Endothelial cell of umbilical vein (primary cell): ENCODE measurements at regions of chr10 and their contacts with region 1.

Region 1: GRCh38 chr10:90912174-90912573 is 8.7 kb downstream of the ANKRD1 start:
- DNase-seq: no peak
- H3K4me3 ChIP-seq: no peak overlapping the region
- H3K27ac ChIP-seq: peak overlapping the region; percentile 25
- H3K4me1 ChIP-seq: peaks cover 44% of the 10 kb centered on the region
- H3K27me3 ChIP-seq: no peaks in the 10 kb centered on the region
- CTCF ChIP-seq: no peak
- POLR2A ChIP-seq: no peak

Region 2: GRCh38 chr10:90879062-90879461 is 33.1 kb before region 1 on chr10:
- CTCF ChIA-PET with region 1: interaction called, 19 read pairs
- POLR2A ChIA-PET with region 1: interaction called, 3 read pairs
- dilution Hi-C with region 1: no loop called
- intact Hi-C with region 1: loop called (anchors 2 kb)
- DNase-seq: no peak
- H3K4me3 ChIP-seq: no peak overlapping the region
- H3K27ac ChIP-seq: no peak overlapping the region
- H3K4me1 ChIP-seq: no peaks in the 10 kb centered on the region
- H3K27me3 ChIP-seq: no peaks in the 10 kb centered on the region
- CTCF ChIP-seq: no peak
- POLR2A ChIP-seq: no peak

Region 3: GRCh38 chr10:90885176-90885575 is 27.0 kb before region 1 on chr10:
- CTCF ChIA-PET with region 1: interaction called, 19 read pairs
- POLR2A ChIA-PET with region 1: no interaction called
- dilution Hi-C with region 1: no loop called
- intact Hi-C with region 1: loop called (anchors 2 kb)
- DNase-seq: no peak
- H3K4me3 ChIP-seq: no peak overlapping the region
- H3K27ac ChIP-seq: no peak overlapping the region
- H3K4me1 ChIP-seq: no peaks in the 10 kb centered on the region
- H3K27me3 ChIP-seq: no peaks in the 10 kb centered on the region
- CTCF ChIP-seq: no peak
- POLR2A ChIP-seq: no peak

Region 4: GRCh38 chr10:90969947-90970684 is 57.9 kb after region 1 on chr10:
- CTCF ChIA-PET with region 1: interaction called, 44 read pairs
- POLR2A ChIA-PET with region 1: interaction called, 7 read pairs
- dilution Hi-C with region 1: no loop called
- intact Hi-C with region 1: loop called (anchors 1 kb)
- DNase-seq: no peak
- H3K4me3 ChIP-seq: no peak overlapping the region
- H3K27ac ChIP-seq: peak overlapping the region; percentile 28
- H3K4me1 ChIP-seq: peaks cover 8% of the 10 kb centered on the region
- H3K27me3 ChIP-seq: no peaks in the 10 kb centered on the region
- CTCF ChIP-seq: no peak
- POLR2A ChIP-seq: no peak

Region 5: DNA sequence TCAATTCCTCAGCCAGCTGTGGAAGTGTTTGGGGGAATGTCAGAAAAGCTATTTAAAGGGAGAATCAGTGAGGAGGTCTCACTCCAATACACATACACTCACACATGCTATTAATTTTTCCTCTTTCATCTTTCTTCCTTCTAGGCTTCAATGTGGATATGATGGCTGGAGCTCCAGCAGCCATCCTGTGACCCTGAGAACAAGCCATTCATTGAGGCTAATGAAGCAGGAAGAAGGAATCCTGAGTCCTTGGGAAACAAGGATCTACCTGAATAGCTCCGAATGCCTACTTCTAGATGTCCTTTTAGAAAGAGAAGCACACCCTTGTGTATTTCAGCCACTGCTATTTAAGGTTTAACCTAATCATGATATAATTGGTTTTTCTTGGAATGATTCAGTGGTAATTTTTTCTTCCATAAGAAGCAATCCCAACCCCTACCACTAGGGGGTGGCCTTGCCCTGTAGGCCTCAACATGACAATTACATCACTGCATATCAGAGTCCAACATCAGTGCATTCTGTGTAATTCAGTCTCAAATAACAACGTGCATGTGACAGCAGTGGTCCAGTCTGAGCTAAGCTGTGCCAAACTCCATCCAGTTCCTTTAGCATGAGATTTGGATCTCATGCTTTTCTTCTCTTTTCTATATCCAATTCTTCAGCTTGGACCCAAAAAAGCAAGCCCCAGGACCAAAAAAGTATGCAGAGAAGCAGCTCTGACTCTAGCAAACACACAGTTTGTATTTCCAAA is 94.0 kb after region 1 on chr10:
- CTCF ChIA-PET with region 1: interaction called, 31 read pairs
- POLR2A ChIA-PET with region 1: no interaction called
- dilution Hi-C with region 1: no loop called
- intact Hi-C with region 1: loop called (anchors 1 kb)
- DNase-seq: peak; percentile 90
- H3K4me3 ChIP-seq: no peak overlapping the region
- H3K27ac ChIP-seq: no peak overlapping the region
- H3K4me1 ChIP-seq: no peaks in the 10 kb centered on the region
- H3K27me3 ChIP-seq: no peaks in the 10 kb centered on the region
- CTCF ChIP-seq: peak; percentile 83 to 87
- POLR2A ChIP-seq: no peak

Region 6: DNA sequence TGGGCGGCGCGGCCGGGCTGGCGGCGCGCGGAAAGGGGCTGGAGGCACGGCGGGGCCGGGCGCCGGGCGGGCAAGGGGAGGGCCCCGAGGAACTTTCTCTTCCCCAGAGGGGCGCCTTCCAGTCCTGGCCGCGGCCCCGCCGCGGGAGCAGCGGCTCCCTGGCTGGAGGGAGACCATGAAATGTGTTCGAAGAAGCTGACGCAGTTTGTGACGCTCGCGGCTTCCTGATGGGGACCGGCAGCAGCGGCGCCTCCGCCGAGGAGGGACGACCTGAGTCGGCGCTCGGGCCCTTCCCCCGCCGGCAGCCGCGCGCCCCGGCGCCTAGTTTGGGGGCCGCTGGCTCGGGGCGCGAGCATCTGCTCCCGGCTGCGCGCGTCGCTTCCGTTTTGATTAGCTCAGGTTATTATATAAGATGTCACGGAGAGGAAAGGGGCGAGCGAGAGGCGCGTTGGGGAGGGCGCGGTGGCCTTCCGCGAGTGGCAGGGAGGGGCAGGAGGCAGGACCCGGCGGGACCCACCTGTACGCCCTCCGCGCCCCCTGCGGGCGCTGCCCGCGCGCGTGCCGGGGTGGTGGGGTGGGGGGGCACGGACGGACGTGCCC is 251.2 kb after region 1 on chr10:
- CTCF ChIA-PET with region 1: interaction called, 9 read pairs
- POLR2A ChIA-PET with region 1: no interaction called
- dilution Hi-C with region 1: no loop called
- intact Hi-C with region 1: loop called (anchors 2 kb)
- DNase-seq: peak; percentile 55
- H3K4me3 ChIP-seq: peak overlapping the region; percentile 61 to 84 (median 71)
- H3K27ac ChIP-seq: peak overlapping the region; percentile 74
- H3K4me1 ChIP-seq: peaks cover 6% of the 10 kb centered on the region
- H3K27me3 ChIP-seq: no peaks in the 10 kb centered on the region
- CTCF ChIP-seq: no peak
- POLR2A ChIP-seq: peak; percentile 21